ENCODE measurements at regions of chrX and their contacts with region 1.

Region 1: GRCh38 chrX:51420610-51421009 is 75.8 kb downstream of the NUDT11 start:
- DNase-seq: no peak
- ATAC-seq: no peak
- H3K4me3 ChIP-seq: no peak overlapping the region
- H3K27ac ChIP-seq: no peak overlapping the region
- H3K4me1 ChIP-seq: no peaks in the 10 kb centered on the region
- H3K27me3 ChIP-seq: peaks cover 0 to 35% (median 0%) of the 10 kb centered on the region in 9 donors
- CTCF ChIP-seq: peak; percentile 35 to 82 (median 58)
- POLR2A ChIP-seq: no peak

Region 2: GRCh38 chrX:51098046-51098445 is 322.6 kb before region 1 on chrX:
- intact Hi-C with region 1: no loop called
- DNase-seq: no peak
- ATAC-seq: no peak
- H3K4me3 ChIP-seq: no peak overlapping the region
- H3K27ac ChIP-seq: no peak overlapping the region
- H3K4me1 ChIP-seq: no peaks in the 10 kb centered on the region
- H3K27me3 ChIP-seq: peaks cover 0 to 13% (median 0%) of the 10 kb centered on the region in 9 donors
- CTCF ChIP-seq: no peak
- POLR2A ChIP-seq: no peak

Region 3: GRCh38 chrX:51151734-51152133 is 268.9 kb before region 1 on chrX:
- intact Hi-C with region 1: loop called in 1 of 10 experiments (anchors 10 kb)
- DNase-seq: no peak
- ATAC-seq: no peak
- H3K4me3 ChIP-seq: no peak overlapping the region
- H3K27ac ChIP-seq: no peak overlapping the region
- H3K4me1 ChIP-seq: no peaks in the 10 kb centered on the region
- H3K27me3 ChIP-seq: peaks cover 0 to 33% (median 0%) of the 10 kb centered on the region in 9 donors
- CTCF ChIP-seq: no peak
- POLR2A ChIP-seq: no peak

Region 4: GRCh38 chrX:51336584-51336983 is 84.0 kb before region 1 on chrX:
- intact Hi-C with region 1: loop called in 9 of 10 experiments (anchors 2 to 10 kb)
- DNase-seq: peak in 1 of 5 donors; percentile 13
- ATAC-seq: peak in 3 of 4 donors; percentile 52 to 78 (median 63)
- H3K4me3 ChIP-seq: no peak overlapping the region
- H3K27ac ChIP-seq: no peak overlapping the region
- H3K4me1 ChIP-seq: peaks cover 0 to 6% (median 0%) of the 10 kb centered on the region in 12 donors
- H3K27me3 ChIP-seq: peaks cover 0 to 32% (median 0%) of the 10 kb centered on the region in 9 donors
- CTCF ChIP-seq: peak; percentile 29 to 60 (median 51)
- POLR2A ChIP-seq: no peak

Region 5: GRCh38 chrX:51476930-51477329 is 56.3 kb after region 1 on chrX:
- intact Hi-C with region 1: no loop called
- DNase-seq: no peak
- ATAC-seq: no peak
- H3K4me3 ChIP-seq: no peak overlapping the region
- H3K27ac ChIP-seq: no peak overlapping the region
- H3K4me1 ChIP-seq: no peaks in the 10 kb centered on the region
- H3K27me3 ChIP-seq: peaks cover 0 to 27% (median 0%) of the 10 kb centered on the region in 9 donors
- CTCF ChIP-seq: no peak
- POLR2A ChIP-seq: no peak

Measured in heart left ventricle (tissue), 16 donors.